ENCODE measurements at regions of chr2 and their contacts with region 1.

Region 1: GRCh38 chr2:45024600-45025291 is 15.5 kb upstream of the SIX2 start:
- DNase-seq: peak; percentile 88 to 97
- H3K4me3 ChIP-seq: no peak overlapping the region
- H3K27ac ChIP-seq: no peak overlapping the region
- H3K4me1 ChIP-seq: peaks cover 11% of the 10 kb centered on the region
- H3K27me3 ChIP-seq: no peaks in the 10 kb centered on the region
- CTCF ChIP-seq: peak; percentile 86

Region 2: DNA sequence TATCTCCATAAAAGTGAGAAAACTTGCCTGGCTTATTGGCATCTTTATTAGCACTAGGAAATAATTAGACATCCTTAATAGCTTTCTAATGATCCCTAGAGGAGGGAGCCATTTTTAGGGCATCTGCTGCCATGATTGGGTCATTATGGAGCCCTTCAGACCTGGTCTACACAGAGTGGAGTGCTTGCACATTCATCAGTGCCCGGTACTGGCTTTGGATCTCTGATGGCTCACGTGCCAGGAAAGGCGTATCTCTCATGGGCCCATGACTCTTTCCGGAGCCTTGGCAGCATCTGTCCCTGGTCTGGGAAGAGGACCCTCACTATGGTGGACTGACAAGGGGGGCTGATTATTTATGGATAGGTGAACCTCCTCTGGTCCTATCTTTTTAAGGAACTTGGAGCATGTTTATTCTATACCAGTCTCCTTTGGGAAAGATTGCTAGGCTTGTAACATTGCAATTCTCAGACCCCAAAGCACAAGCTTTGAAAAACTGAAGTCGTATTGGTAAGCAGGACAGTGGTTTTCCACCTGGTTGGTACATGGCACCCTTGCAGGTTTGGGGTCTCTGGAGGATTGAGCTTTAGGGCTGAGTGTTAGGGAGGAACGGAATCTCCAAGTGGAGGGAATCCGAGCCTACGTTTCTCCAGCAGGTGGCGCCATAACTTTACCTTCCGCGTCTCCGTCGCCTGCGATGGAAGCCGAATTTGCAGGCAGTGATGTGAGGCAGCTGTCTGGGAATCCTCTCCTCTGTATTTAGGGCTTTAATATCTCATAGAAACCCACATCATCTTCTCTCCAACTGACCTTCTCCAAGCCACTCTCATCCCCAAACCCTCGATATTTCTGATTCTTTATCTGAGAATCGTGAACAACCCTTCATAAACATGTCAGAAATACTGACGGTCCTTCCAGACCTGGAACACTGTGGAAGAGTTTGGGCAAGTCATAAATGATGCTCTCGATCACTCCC is 43.3 kb before region 1 on chr2:
- CTCF ChIA-PET with region 1: interaction called, 4 read pairs
- POLR2A ChIA-PET with region 1: no interaction called
- intact Hi-C with region 1: loop called (anchors 5 kb)
- DNase-seq: peak; percentile 62 to 76
- H3K4me3 ChIP-seq: no peak overlapping the region
- H3K27ac ChIP-seq: no peak overlapping the region
- H3K4me1 ChIP-seq: no peaks in the 10 kb centered on the region
- H3K27me3 ChIP-seq: no peaks in the 10 kb centered on the region
- CTCF ChIP-seq: peak; percentile 96

Region 3: GRCh38 chr2:45045695-45046094 is 20.9 kb after region 1 on chr2:
- CTCF ChIA-PET with region 1: interaction called, 11 read pairs
- POLR2A ChIA-PET with region 1: interaction called, 4 read pairs
- intact Hi-C with region 1: no loop called
- DNase-seq: no peak
- H3K4me3 ChIP-seq: no peak overlapping the region
- H3K27ac ChIP-seq: no peak overlapping the region
- H3K4me1 ChIP-seq: no peaks in the 10 kb centered on the region
- H3K27me3 ChIP-seq: no peaks in the 10 kb centered on the region
- CTCF ChIP-seq: no peak

Region 4: DNA sequence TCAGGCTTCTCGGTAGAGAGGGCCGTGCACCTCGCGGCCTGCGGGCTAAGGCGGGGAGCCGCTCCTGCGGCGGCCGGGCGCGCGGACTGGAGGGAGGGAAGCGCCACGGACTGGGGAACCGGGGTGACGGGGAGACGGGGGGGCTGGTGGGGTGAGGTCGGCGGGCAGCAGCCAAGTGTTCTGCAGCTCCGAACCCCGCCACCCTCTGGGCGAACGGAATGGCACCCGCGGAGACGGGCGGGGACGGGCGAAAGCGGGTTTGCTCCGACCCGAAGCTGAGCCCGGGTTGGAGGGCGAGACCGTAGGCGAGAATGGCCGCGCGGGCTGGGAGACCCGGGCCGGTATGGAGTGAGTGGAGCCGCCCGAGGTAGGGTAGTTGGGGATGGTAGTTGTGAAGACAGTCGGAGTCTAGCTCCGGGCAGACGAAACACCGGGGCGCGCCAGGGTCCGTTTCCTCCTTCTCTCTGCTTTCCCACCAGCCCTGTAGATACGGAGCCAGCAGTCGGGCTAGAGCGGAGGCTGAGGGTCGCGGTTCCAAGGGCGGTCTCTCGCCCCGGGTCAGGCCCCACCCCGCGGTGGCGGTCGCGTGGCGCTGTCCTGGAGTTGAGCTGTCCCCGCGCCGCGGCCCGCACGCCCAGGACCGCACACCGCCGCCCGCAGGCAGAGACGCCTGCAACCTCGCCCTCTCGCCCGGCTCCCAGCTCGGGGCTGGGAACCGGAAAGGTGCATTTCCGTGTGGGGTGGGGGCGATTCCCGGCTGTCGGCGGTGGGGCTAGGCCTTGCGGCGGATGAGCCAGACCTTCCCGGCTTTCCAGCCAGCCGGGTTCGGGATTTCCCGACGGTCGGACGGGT is 144.8 kb after region 1 on chr2:
- CTCF ChIA-PET with region 1: interaction called, 8 read pairs
- POLR2A ChIA-PET with region 1: interaction called, 5 read pairs
- intact Hi-C with region 1: loop called (anchors 1 kb)
- DNase-seq: peak in 1 of 2 experiments; percentile 56
- H3K4me3 ChIP-seq: peak overlapping the region; percentile 79
- H3K27ac ChIP-seq: peak overlapping the region; percentile 57
- H3K4me1 ChIP-seq: peaks cover 57% of the 10 kb centered on the region
- H3K27me3 ChIP-seq: no peaks in the 10 kb centered on the region
- CTCF ChIP-seq: 0 out of 2 replicates have a peak, but pooled peaks have one; percentile 19

Region 5: GRCh38 chr2:45237850-45238542 is 213.2 kb after region 1 on chr2:
- CTCF ChIA-PET with region 1: interaction called, 4 read pairs
- POLR2A ChIA-PET with region 1: no interaction called
- intact Hi-C with region 1: loop called (anchors 1 kb)
- DNase-seq: peak; percentile 87 to 99
- H3K4me3 ChIP-seq: peak overlapping the region; percentile 5; the same call in 1 of the 2 replicates
- H3K27ac ChIP-seq: peak overlapping the region; percentile 63
- H3K4me1 ChIP-seq: peaks cover 48% of the 10 kb centered on the region
- H3K27me3 ChIP-seq: no peaks in the 10 kb centered on the region
- CTCF ChIP-seq: peak; percentile 74

Region 6: GRCh38 chr2:45300026-45300750 is 275.4 kb after region 1 on chr2:
- CTCF ChIA-PET with region 1: no interaction called
- POLR2A ChIA-PET with region 1: interaction called, 21 read pairs
- intact Hi-C with region 1: no loop called
- DNase-seq: no peak
- H3K4me3 ChIP-seq: no peak overlapping the region
- H3K27ac ChIP-seq: no peak overlapping the region
- H3K4me1 ChIP-seq: no peaks in the 10 kb centered on the region
- H3K27me3 ChIP-seq: no peaks in the 10 kb centered on the region
- CTCF ChIP-seq: no peak

Region 7: DNA sequence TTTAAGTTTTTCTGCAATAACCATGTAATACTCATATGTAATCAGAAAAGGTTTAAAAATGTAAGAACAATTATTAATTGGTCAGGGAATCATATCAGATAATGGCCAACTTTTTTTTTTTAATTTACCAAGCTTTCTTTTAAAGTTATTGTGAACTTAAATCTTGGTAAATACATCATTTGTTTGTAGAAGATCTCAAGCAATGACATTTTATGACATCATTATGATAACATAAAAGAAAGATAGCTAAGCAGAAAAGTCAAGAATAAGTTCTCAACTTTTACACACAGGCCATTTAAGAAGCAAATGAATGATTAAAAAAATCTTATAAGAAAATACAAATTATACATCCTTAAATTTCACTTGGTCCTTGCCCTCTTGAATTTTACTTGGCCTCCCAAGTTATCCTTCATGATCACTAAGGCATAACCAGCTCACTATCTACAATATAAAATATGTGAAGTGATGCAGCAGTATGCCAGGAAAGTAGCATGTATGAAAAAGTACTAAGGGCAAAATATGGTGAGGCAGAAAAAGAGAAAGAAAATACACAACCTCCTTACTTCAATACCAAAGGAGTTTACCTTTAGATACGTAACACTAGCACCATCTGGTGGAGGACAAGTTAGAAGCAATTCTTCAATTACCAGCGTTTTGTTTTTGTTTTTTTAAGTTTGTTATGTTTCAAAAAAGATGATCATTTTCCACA is 469.7 kb after region 1 on chr2:
- CTCF ChIA-PET with region 1: interaction called, 14 read pairs
- POLR2A ChIA-PET with region 1: no interaction called
- intact Hi-C with region 1: loop called (anchors 1 kb)
- DNase-seq: peak; percentile 17 to 68
- H3K4me3 ChIP-seq: no peak overlapping the region
- H3K27ac ChIP-seq: no peak overlapping the region
- H3K4me1 ChIP-seq: no peaks in the 10 kb centered on the region
- H3K27me3 ChIP-seq: no peaks in the 10 kb centered on the region
- CTCF ChIP-seq: peak; percentile 96